ENCODE measurements at regions of chr17 and their contacts with region 1.

Region 1: DNA sequence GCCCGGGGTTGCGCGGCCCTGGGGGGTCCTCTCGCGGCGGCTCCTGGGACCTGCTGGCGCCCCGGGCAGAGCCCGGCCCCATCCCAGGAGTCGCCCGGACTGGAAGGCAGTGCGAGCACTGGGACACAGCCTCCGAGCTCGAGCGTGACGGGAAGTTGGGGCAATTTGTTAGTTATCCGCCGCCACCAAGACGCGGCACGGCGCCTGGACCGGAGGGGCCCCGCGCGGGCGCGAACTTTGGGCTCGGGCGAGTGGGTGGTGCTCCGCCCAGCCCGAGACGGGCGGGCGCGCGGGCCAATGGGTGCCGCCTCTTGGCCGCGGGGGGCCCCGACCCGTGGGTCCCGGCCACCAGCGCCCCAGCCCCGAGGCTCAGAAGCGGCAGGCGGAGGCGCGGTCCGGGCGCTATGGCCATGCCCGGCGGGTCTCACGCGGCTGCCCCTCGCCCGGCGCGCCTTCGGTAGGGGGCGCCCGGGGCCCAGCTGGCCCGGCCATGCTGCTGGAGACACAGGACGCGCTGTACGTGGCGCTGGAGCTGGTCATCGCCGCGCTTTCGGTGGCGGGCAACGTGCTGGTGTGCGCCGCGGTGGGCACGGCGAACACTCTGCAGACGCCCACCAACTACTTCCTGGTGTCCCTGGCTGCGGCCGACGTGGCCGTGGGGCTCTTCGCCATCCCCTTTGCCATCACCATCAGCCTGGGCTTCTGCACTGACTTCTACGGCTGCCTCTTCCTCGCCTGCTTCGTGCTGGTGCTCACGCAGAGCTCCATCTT is at the start of gene ADORA2B:
- DNase-seq: peak; percentile 74 to 95 (median 90)
- ATAC-seq: peak; percentile 86
- H3K4me3 ChIP-seq: peak within 1 kb of the TSS; percentile 61
- H3K27ac ChIP-seq: peak within 1 kb of the TSS; percentile 70
- H3K4me1 ChIP-seq: peaks cover 16 to 36% of the 10 kb centered on the region in 2 experiments; a peak in 4 of 5 replicates
- H3K27me3 ChIP-seq: no peaks in the 10 kb centered on the region
- CTCF ChIP-seq: peak; percentile 24 to 64 (median 61)
- EP300 ChIP-seq: no peak
- POLR2A ChIP-seq: peak; percentile 54; the same call in 1 of the 2 replicates
- RAD21 ChIP-seq: peak; percentile 65 to 74
- polyA plus RNA-seq, gene ADORA2B: 6.4 to 9.2 TPM

Region 2: DNA sequence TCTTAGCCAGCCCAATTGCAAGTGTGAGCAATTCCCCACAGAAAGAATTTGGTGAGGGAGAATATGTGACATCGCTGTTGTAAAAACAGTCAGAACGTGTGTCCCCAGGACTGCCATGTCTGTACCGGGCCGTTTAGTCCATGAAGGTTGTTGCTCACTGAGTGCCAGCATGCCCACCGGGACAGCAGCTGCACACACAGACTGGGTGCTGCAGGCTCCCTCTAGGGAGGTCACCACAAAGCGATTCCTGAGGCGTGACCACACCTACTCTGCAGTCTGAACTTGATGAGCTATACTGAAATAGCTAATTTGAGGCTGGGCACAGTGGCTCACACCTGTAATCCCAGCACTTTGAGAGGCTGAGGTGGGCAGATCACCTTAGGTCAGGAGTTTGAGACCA is 44.1 kb before region 1 on chr17:
- CTCF ChIA-PET with region 1: no interaction called
- POLR2A ChIA-PET with region 1: no interaction called
- in situ Hi-C with region 1: no loop called
- intact Hi-C with region 1: no loop called
- DNase-seq: no peak
- ATAC-seq: no peak
- H3K4me3 ChIP-seq: no peak overlapping the region
- H3K27ac ChIP-seq: no peak overlapping the region
- H3K4me1 ChIP-seq: no peaks in the 10 kb centered on the region
- H3K27me3 ChIP-seq: no peaks in the 10 kb centered on the region
- CTCF ChIP-seq: no peak
- EP300 ChIP-seq: no peak
- POLR2A ChIP-seq: no peak
- RAD21 ChIP-seq: no peak

Region 3: DNA sequence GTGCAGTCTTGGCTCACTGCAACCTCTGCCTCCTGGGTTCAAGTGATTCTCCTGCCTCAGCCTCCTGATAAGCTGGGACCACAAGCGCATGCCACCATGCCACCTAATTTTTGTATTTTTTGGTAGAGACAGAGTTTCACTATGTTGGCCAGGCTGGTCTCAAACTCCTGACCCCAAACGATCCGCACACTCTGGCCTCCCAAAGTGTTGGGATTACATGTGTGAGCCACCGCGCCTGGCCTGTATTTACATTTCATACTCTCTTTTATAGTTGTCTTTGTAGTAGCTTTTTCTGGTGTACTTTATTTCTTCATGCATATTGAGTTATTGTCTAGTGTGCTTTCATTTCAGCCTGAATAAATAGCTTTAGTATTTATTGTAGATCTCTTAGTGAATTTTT is 10.1 kb before region 1 on chr17:
- CTCF ChIA-PET with region 1: interaction called, 3 read pairs
- POLR2A ChIA-PET with region 1: interaction called, 10 read pairs
- in situ Hi-C with region 1: no loop called
- intact Hi-C with region 1: no loop called
- DNase-seq: no peak
- ATAC-seq: no peak
- H3K4me3 ChIP-seq: no peak overlapping the region
- H3K27ac ChIP-seq: no peak overlapping the region
- H3K4me1 ChIP-seq: peaks cover 0 to 5% of the 10 kb centered on the region in 2 experiments; a peak in 1 of 5 replicates
- H3K27me3 ChIP-seq: no peaks in the 10 kb centered on the region
- CTCF ChIP-seq: no peak
- EP300 ChIP-seq: no peak
- POLR2A ChIP-seq: no peak
- RAD21 ChIP-seq: no peak

Region 4: GRCh38 chr17:15981208-15981607 is 36.3 kb after region 1 on chr17:
- CTCF ChIA-PET with region 1: no interaction called
- POLR2A ChIA-PET with region 1: interaction called, 3 read pairs
- in situ Hi-C with region 1: no loop called
- intact Hi-C with region 1: loop called (anchors 5 kb)
- DNase-seq: no peak
- ATAC-seq: peak; percentile 40
- H3K4me3 ChIP-seq: no peak overlapping the region
- H3K27ac ChIP-seq: peak overlapping the region; percentile 83
- H3K4me1 ChIP-seq: peaks cover 20 to 34% of the 10 kb centered on the region in 2 experiments; a peak in 4 of 5 replicates
- H3K27me3 ChIP-seq: no peaks in the 10 kb centered on the region
- CTCF ChIP-seq: no peak
- EP300 ChIP-seq: no peak
- POLR2A ChIP-seq: no peak
- RAD21 ChIP-seq: no peak

Region 5: GRCh38 chr17:15999439-16000350 is 54.8 kb after region 1 on chr17 and contains the starts of genes TTC19 and ZSWIM7:
- CTCF ChIA-PET with region 1: interaction called, 12 read pairs
- POLR2A ChIA-PET with region 1: interaction called, 14 read pairs
- in situ Hi-C with region 1: loop called (anchors 10 kb)
- intact Hi-C with region 1: loop called (anchors 1 kb)
- DNase-seq: peak; percentile 89 to 96 (median 94)
- ATAC-seq: peak; percentile 97
- H3K4me3 ChIP-seq: peak within 1 kb of the TSS; percentile 84
- H3K27ac ChIP-seq: peak within 1 kb of the TSS; percentile 85
- H3K4me1 ChIP-seq: peaks cover 8 to 15% of the 10 kb centered on the region in 2 experiments; a peak in 2 of 5 replicates
- H3K27me3 ChIP-seq: no peaks in the 10 kb centered on the region
- CTCF ChIP-seq: no peak; a peak in 1 of 6 replicates
- EP300 ChIP-seq: peak; percentile 26; the same call in 1 of the 2 replicates
- POLR2A ChIP-seq: peak; percentile 79
- RAD21 ChIP-seq: no peak; a peak in 1 of 4 replicates
- polyA plus RNA-seq, gene TTC19: 8.9 to 10.5 TPM
- polyA plus RNA-seq, gene ZSWIM7: 5.9 to 8.0 TPM

Measured in K562 (cell line).